Calu3 (cell line): ENCODE measurements at regions of chr7 and their contacts with region 1.

Region 1: GRCh38 chr7:10128748-10129147 is 844.9 kb upstream of the PHF14 start:
- DNase-seq: peak; percentile 56
- H3K4me3 Mint-ChIP-seq: no peak overlapping the region
- H3K27ac Mint-ChIP-seq: no peak overlapping the region
- H3K4me1 Mint-ChIP-seq: no peaks in the 10 kb centered on the region
- H3K27me3 Mint-ChIP-seq: no peaks in the 10 kb centered on the region
- CTCF ChIP-seq: peak; percentile 58

Region 2: GRCh38 chr7:9937944-9938631 is 190.7 kb before region 1 on chr7:
- CTCF ChIA-PET with region 1: no interaction called
- intact Hi-C with region 1: loop called (anchors 5 kb)
- DNase-seq: peak; percentile 3
- H3K4me3 Mint-ChIP-seq: no peak overlapping the region
- H3K27ac Mint-ChIP-seq: no peak overlapping the region
- H3K4me1 Mint-ChIP-seq: peaks cover 19% of the 10 kb centered on the region
- H3K27me3 Mint-ChIP-seq: no peaks in the 10 kb centered on the region
- CTCF ChIP-seq: no peak

Region 3: DNA sequence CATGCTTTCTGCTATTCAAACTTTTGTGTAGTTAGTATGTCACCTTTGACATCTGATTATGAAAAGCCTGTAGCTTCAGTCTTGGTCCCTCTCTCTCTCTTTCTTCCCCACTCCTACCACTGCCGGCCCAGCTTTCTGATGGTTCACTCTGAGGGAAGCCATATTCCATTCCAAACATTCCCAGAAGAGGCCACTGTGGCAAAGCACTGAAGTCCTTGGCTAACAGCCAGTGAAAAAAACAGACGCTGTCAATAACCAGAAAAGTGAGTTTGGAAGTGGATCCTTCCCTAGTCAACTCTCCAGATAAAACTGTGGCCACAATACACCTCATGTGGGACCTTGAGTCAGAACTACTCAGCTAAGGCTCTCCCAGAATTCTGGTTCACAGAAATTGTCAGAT is 105.8 kb before region 1 on chr7:
- CTCF ChIA-PET with region 1: interaction called, 4 read pairs
- intact Hi-C with region 1: loop called (anchors 2 kb)
- DNase-seq: peak; percentile 73
- H3K4me3 Mint-ChIP-seq: peak overlapping the region; percentile 46
- H3K27ac Mint-ChIP-seq: peak overlapping the region; percentile 80
- H3K4me1 Mint-ChIP-seq: peaks cover 9% of the 10 kb centered on the region
- H3K27me3 Mint-ChIP-seq: no peaks in the 10 kb centered on the region
- CTCF ChIP-seq: no peak

Region 4: DNA sequence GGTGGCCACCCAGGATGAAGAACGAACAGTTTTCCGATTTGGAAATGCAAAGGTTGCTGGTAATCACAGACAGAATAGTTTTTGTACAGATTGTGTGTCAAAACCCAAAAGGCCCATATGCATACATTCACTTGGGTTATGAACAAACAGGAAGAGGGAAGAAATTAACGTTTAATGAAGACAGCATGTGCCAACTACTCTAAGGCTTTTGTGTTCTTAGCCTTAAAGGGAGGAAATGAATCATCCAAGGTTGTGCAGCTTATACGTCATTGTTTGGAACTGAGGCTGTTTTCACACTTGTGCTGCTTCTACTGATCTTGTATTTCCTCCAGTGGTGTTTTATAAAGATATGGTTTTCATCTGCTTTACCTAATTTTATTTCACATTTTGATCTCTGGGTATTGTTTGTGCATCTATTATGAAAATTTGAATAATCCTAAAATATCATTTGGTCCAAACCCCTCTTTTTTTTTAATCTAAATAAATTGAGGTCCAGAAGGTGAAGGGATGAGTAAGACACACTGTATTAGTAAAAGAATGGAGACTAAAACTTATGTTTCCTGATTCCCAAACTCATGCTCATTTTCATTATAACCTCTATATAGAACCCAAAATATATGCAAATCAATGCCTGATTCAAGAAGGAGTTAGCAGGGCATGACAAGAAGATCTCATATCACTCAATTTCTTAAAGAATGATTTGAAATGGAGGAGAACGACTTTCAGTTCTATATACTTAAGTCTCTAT is 1330.2 kb after region 1 on chr7:
- CTCF ChIA-PET with region 1: no interaction called
- intact Hi-C with region 1: no loop called
- DNase-seq: peak; percentile 38
- H3K4me3 Mint-ChIP-seq: peak overlapping the region; percentile 0
- H3K27ac Mint-ChIP-seq: peak overlapping the region; percentile 71
- H3K4me1 Mint-ChIP-seq: peaks cover 22% of the 10 kb centered on the region
- H3K27me3 Mint-ChIP-seq: no peaks in the 10 kb centered on the region
- CTCF ChIP-seq: no peak